ENCODE measurements at regions of chr14 and their contacts with region 1.

Region 1: DNA sequence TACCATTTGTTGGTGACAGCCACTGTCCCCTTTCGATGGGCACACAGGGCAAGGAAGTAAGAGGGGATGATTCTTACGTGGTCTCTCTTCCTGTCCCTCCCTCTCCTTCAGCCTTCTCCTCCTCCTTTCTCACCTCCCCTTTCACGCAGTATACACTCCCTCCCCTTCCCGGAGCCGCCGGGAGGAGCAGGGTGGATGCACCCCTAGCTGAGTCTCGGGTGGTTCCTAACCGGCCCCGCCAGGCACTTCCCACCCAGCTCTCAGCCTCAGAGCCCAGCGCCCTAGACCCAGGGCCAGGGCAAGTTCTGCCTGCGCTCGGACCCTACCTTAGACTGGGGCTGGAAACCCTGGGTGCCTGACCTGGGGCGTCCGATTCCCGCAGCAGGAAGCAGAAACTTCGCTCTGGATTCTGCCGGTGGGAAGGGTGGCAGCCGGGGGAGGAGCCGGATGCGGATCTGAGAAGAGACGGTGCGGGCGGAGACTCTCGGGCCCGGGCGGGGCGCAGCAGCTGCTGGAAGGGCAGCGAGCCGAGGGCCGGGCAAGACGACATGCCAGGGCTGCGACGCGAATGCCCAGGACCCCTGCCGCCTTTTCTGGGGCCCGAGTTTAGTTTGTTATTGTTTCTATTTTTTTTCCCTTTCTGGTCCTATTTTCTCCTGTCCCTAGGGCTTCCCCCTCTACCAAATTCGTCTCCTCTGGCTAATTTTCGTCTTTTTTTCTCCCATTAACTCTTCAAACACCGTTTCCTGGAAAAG is at the start of gene TEP1:
- DNase-seq: peak; percentile 80
- H3K4me3 ChIP-seq: peak within 1 kb of the TSS; percentile 80 to 97 (median 86)
- H3K27ac ChIP-seq: peak within 1 kb of the TSS; percentile 85
- H3K4me1 ChIP-seq: peaks cover 17% of the 10 kb centered on the region
- H3K27me3 ChIP-seq: no peaks in the 10 kb centered on the region
- CTCF ChIP-seq: no peak
- POLR2A ChIP-seq: peak; percentile 78
- total RNA-seq, gene TEP1: 40.3 and 44.6 TPM in 2 replicates

Region 2: GRCh38 chr14:20343092-20343861 is 69.9 kb before region 1 on chr14 and contains the start of gene PARP2:
- CTCF ChIA-PET with region 1: interaction called, 3 read pairs
- POLR2A ChIA-PET with region 1: interaction called, 11 read pairs
- dilution Hi-C with region 1: no loop called
- intact Hi-C with region 1: no loop called
- DNase-seq: peak; percentile 100
- H3K4me3 ChIP-seq: peak within 1 kb of the TSS; percentile 78 to 95 (median 78)
- H3K27ac ChIP-seq: peak within 1 kb of the TSS; percentile 85
- H3K4me1 ChIP-seq: peaks cover 11% of the 10 kb centered on the region
- H3K27me3 ChIP-seq: no peaks in the 10 kb centered on the region
- CTCF ChIP-seq: no peak
- POLR2A ChIP-seq: peak; percentile 100
- total RNA-seq, gene PARP2: 30.6 and 30.8 TPM in 2 replicates

Region 3: DNA sequence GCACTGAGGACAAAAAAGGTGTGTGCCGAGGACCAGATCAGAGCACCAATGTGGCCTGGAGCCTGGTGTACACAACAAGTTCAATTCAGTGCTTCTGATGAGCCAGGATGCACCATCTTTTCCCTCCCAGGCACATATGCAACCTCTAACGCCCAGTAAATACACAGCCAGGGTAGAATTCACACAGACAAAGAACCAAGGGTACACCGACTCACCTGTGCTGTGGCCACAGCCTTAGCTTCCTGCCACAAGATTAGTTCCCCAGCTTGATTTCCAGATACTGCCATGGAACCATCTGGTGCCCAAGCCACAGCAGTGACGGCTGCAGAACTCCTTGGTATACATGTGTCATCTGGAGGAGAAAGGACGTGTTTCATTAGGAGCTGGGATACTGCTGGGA is 40.4 kb before region 1 on chr14:
- CTCF ChIA-PET with region 1: no interaction called
- POLR2A ChIA-PET with region 1: no interaction called
- dilution Hi-C with region 1: no loop called
- intact Hi-C with region 1: no loop called
- DNase-seq: no peak
- H3K4me3 ChIP-seq: no peak overlapping the region
- H3K27ac ChIP-seq: no peak overlapping the region
- H3K4me1 ChIP-seq: no peaks in the 10 kb centered on the region
- H3K27me3 ChIP-seq: no peaks in the 10 kb centered on the region
- CTCF ChIP-seq: no peak
- POLR2A ChIP-seq: no peak

Region 4: GRCh38 chr14:20446889-20447288 is 33.7 kb after region 1 on chr14:
- CTCF ChIA-PET with region 1: interaction called, 13 read pairs
- POLR2A ChIA-PET with region 1: no interaction called
- dilution Hi-C with region 1: no loop called
- intact Hi-C with region 1: no loop called
- DNase-seq: no peak
- H3K4me3 ChIP-seq: no peak overlapping the region
- H3K27ac ChIP-seq: no peak overlapping the region
- H3K4me1 ChIP-seq: no peaks in the 10 kb centered on the region
- H3K27me3 ChIP-seq: no peaks in the 10 kb centered on the region
- CTCF ChIP-seq: no peak
- POLR2A ChIP-seq: no peak

Region 5: DNA sequence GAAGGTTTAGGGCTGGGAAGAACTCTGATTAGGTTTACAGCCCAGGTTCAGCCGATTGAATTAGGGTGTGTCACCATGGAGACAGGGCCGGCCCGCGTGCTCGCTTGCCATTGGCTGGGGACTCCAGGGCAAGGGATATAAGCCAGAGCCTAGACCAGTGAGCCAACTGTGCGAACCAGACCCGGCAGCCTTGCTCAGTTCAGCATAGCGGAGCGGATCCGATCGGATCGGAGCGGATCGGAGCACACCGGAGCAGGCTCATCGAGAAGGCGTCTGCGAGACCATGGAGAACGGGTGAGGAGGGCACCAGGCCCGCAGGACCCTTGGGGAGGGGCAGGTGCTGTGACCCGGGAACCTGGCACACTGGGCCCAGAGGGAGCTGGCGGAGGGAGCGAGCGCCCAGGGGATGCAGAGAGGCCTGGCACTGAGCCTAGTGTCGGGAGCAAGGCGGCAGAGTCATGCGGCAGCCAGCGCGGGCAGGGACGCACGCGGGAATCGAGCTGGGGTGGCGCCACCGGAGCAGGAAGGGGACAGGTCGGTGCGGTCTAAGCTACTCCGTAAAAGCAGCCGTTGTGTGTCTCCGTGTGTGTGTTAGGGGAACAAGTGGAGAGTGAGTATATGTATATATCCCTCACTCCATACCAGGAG is 56.1 kb after region 1 on chr14 and contains the start of gene PNP:
- CTCF ChIA-PET with region 1: interaction called, 16 read pairs
- POLR2A ChIA-PET with region 1: interaction called, 10 read pairs
- dilution Hi-C with region 1: no loop called
- intact Hi-C with region 1: loop called (anchors 1 kb)
- DNase-seq: peak; percentile 89
- H3K4me3 ChIP-seq: peak within 1 kb of the TSS; percentile 60 to 94 (median 77)
- H3K27ac ChIP-seq: peak within 1 kb of the TSS; percentile 76
- H3K4me1 ChIP-seq: peaks cover 24% of the 10 kb centered on the region
- H3K27me3 ChIP-seq: peaks cover 2 to 6% of the 10 kb centered on the region in 2 experiments
- CTCF ChIP-seq: no peak
- POLR2A ChIP-seq: peak; percentile 99
- total RNA-seq, gene PNP: 189 and 271 TPM in 2 replicates

Region 6: GRCh38 chr14:20606190-20606901 is 193.1 kb after region 1 on chr14:
- CTCF ChIA-PET with region 1: interaction called, 110 read pairs
- POLR2A ChIA-PET with region 1: no interaction called
- dilution Hi-C with region 1: no loop called
- intact Hi-C with region 1: loop called (anchors 1 kb)
- DNase-seq: peak; percentile 55
- H3K4me3 ChIP-seq: no peak overlapping the region
- H3K27ac ChIP-seq: no peak overlapping the region
- H3K4me1 ChIP-seq: peaks cover 4% of the 10 kb centered on the region
- H3K27me3 ChIP-seq: peaks cover 0 to 3% of the 10 kb centered on the region in 2 experiments
- CTCF ChIP-seq: peak; percentile 66 to 79
- POLR2A ChIP-seq: no peak

Measured in endothelial cell of umbilical vein (primary cell).